Right ventricle myocardium inferior (tissue), 1 donor: ENCODE measurements at regions of chr3 and their contacts with region 1.

Region 1: DNA sequence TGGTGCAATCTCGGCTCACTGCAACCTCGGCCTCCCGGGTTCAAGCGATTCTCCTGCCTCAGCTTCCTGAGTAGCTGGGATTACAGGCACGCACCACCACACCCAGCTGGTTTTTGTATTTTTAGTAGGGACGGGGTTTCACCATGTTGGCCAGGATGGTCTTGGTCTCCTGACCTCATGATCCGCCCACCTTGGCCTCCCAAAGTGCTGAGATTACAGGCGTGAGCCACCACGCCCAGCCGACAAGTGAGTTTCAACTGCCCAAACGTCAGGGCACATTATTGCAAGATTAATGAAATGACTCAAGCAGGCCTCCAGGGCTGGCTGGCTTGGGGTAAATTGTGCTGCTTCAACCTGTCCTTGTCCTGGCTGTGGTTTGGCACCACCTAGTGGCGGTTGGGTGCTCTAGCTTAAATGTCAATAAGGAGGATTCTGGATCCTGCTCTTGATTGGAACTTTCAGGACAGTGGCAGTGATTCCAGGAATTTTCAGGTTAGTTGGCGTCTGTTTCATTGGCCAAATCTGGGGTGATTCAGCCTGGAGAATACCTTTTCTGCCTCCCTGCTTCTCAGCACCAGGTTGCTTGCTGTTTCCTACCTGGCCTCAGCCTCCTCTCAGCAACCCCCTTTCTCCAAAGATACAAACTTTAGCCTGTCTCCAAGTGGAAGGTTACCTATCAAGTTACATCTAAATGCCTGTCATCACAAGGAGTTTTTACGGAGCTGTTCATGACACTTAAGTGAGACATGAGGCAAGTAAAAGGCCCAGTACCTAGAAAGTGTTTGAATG is 32.4 kb upstream of the SACM1L start:
- DNase-seq: peak; percentile 95
- ATAC-seq: peak; percentile 88

Region 2: DNA sequence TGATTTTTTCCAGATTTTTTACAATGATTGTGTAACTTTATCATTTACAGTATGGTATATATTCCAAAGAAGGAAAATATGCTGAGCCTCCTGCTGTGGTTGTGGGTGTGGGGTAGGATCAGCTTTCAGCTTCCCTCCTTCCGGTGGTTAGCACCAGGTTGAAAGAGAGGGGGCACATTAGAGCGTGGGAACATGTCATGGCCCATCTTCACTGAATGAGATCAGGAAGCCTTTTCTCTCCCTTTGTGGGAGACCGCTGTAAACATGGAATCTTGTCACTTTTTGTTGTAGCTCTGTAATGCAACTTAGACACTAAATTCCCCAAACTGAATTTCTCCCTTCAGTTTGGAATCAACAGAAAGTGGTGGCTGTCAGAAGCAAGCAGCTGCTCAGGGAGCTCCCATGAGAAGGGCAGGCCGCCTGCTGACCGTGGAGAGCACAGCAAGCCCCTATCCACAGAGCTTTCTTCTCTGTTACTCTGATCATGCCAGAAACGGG is 148.9 kb before region 1 on chr3:
- intact Hi-C with region 1: loop called (anchors 1 kb)
- DNase-seq: no peak
- ATAC-seq: peak; percentile 88